ENCODE measurements at regions of chr2 and their contacts with region 1.

Region 1: GRCh38 chr2:174697255-174697654 is 67.0 kb downstream of the CHRNA1 start:
- DNase-seq: no peak
- ATAC-seq: peak; percentile 63 to 87 (median 80)
- H3K4me3 ChIP-seq: no peak overlapping the region
- H3K27ac ChIP-seq: no peak overlapping the region
- H3K4me1 ChIP-seq: no peaks in the 10 kb centered on the region
- H3K27me3 ChIP-seq: peaks cover 0 to 7% (median 0%) of the 10 kb centered on the region in 3 donors
- CTCF ChIP-seq: peak; percentile 68

Region 2: GRCh38 chr2:174787487-174788205 is 90.4 kb after region 1 on chr2:
- intact Hi-C with region 1: no loop called
- DNase-seq: no peak
- ATAC-seq: no peak
- H3K4me3 ChIP-seq: no peak overlapping the region
- H3K27ac ChIP-seq: no peak overlapping the region
- H3K4me1 ChIP-seq: no peaks in the 10 kb centered on the region
- H3K27me3 ChIP-seq: no peaks in the 10 kb centered on the region
- CTCF ChIP-seq: no peak

Region 3: DNA sequence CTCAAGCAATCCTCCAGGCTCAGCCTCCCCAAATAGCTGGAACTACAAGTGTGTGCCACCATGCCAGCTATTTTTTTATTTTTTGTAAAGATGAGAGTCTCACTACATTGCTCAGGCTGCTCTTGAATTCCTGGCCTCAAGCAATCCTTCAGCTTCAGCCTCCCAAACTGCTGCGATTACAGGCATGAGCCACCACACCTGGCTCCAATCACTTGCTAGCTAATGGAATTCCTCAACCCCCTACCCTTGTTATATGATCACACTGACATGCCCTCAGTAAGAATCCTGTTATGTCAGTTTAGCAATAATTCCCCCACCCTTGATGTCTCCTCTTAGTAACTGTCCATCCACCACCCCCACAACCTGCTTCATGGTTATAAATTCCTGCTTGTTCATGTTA is 295.6 kb after region 1 on chr2:
- intact Hi-C with region 1: loop called in 1 of 2 experiments (anchors 2 kb)
- DNase-seq: no peak
- ATAC-seq: no peak
- H3K4me3 ChIP-seq: no peak overlapping the region
- H3K27ac ChIP-seq: no peak overlapping the region
- H3K4me1 ChIP-seq: no peaks in the 10 kb centered on the region
- H3K27me3 ChIP-seq: no peaks in the 10 kb centered on the region
- CTCF ChIP-seq: no peak

Region 4: DNA sequence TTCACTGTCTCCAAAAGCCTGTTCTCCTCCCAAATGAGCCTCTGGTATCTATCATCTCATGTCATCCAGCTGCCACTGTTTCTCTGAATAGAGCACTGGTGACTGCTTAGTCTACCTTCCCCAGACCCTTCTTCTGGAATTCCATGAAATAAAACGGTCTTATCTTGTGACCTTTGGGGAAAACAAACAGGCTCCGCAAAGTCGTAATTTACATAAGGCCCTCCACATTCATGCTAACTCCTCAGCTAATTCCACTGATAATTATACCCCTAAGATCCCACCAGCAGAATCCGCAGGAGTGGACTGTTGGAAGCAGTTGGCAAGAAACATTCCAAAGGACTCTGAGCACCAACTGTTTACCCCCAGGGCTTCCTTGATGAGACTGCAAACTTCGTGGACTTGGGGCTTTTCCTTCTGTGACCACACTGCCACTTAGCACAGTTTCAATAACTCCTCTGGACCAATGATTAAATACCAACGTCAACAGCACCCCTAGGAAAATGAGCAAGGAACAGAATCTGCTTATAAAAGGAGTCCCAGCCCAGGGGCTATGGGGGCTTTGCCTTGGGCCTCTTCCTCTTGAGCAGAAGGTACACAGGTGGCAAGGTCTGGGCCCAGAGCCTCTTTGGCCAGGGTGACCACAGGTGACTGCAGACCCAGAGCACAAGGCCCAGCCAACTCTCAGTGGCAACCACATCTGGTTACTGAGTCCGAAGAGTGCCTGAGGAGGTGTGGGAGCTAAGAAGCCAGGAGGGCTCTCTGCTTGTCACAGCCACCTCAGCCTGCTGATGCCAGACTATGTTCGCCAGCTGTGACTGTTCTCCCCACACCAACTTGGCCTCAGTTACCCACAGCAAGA is 342.0 kb after region 1 on chr2:
- intact Hi-C with region 1: no loop called
- DNase-seq: no peak
- ATAC-seq: no peak
- H3K4me3 ChIP-seq: no peak overlapping the region
- H3K27ac ChIP-seq: no peak overlapping the region
- H3K4me1 ChIP-seq: no peaks in the 10 kb centered on the region
- H3K27me3 ChIP-seq: no peaks in the 10 kb centered on the region
- CTCF ChIP-seq: no peak